ENCODE measurements at regions of chr18 and their contacts with region 1.

Region 1: DNA sequence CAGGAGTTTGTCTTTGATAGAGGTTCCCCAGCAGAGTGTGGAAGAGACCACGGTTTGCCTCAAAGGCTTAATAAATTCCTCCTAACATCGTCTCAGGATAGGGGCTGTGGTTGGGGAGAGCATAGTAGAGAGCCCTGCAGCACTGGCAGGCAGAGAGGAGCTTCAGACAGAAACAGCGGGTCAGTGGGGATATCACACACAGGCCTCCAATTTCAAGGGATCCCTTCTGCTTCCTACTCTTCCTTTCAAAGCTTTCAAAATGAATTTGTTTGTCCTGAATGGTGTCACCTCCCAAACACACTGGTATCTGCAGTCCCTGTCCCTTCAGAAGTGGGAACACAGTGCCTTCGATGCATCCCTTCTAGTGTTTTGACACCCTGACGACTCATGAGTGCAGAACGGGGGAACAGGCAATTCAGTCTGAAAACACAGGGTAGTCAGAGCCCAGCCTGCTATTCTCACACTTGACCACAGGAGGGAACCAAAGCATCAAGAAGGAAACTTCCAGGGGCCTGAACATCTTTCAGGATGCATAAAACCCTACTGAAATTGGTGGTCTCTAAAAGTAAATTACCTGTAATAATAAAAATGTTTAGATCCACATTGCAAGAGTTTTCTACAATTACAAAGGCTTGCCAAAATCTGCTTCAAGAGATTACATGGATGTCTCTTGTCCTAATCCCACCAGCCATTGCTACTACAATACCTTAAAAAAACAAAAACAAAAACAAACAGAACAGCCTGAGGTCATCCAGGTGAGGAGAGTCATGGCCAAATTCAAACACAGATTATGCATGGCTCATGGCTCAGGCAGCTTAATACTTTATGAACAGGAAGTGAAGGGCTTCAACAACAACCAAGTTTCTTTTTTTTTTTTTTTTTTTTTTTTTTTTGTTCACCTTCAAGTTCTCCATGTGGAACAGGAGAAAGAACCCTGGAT is 49.8 kb downstream of the SLC14A2 start:
- DNase-seq: peak; percentile 75
- H3K4me3 ChIP-seq: no peak overlapping the region
- H3K27ac ChIP-seq: no peak overlapping the region
- H3K4me1 ChIP-seq: no peaks in the 10 kb centered on the region
- H3K27me3 ChIP-seq: no peaks in the 10 kb centered on the region
- CTCF ChIP-seq: peak; percentile 83

Region 2: DNA sequence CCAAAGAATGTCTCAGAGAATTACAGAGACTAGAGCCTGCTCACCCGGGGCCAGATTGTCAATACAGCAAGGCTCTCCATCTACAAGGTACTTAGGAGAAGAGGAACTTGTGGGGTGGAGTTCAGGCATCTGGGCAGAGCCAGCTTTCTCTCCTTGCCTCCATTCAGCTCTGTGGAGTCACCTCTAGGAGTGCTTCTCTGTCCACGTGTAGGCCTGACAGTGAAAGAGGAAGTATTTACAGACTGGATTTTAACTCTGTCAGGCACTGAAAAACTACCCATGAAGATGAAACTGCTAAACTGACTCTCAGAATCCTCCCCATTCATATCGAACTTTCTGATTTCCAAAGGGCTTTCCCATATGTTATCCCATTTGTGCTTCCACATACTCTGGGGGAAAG is 668.8 kb before region 1 on chr18:
- CTCF ChIA-PET with region 1: interaction called, 20 read pairs
- POLR2A ChIA-PET with region 1: no interaction called
- intact Hi-C with region 1: no loop called
- DNase-seq: no peak
- H3K4me3 ChIP-seq: no peak overlapping the region
- H3K27ac ChIP-seq: no peak overlapping the region
- H3K4me1 ChIP-seq: no peaks in the 10 kb centered on the region
- H3K27me3 ChIP-seq: no peaks in the 10 kb centered on the region
- CTCF ChIP-seq: no peak

Region 3: DNA sequence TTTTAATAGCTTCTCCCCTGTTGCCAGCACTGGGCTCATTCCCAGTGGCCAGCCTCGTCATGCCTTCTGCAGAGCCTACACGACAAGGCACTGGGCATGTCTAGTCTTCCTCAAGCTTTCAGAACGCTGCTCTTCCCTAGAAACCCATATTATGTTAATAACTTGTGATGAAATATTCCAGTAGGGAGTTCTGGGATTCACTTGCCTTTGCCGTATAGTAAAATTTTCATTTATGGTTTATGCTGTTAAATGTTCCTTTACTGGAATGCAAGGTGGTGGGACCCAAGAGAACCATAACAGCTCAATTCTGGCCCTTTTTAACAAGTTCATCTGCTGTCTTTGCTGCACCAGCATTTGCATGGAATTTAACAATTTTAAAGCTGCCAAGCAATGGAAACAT is 13.3 kb after region 1 on chr18:
- CTCF ChIA-PET with region 1: interaction called, 10 read pairs
- POLR2A ChIA-PET with region 1: no interaction called
- intact Hi-C with region 1: no loop called
- DNase-seq: no peak
- H3K4me3 ChIP-seq: no peak overlapping the region
- H3K27ac ChIP-seq: no peak overlapping the region
- H3K4me1 ChIP-seq: no peaks in the 10 kb centered on the region
- H3K27me3 ChIP-seq: peaks cover 4% of the 10 kb centered on the region
- CTCF ChIP-seq: no peak

Region 4: DNA sequence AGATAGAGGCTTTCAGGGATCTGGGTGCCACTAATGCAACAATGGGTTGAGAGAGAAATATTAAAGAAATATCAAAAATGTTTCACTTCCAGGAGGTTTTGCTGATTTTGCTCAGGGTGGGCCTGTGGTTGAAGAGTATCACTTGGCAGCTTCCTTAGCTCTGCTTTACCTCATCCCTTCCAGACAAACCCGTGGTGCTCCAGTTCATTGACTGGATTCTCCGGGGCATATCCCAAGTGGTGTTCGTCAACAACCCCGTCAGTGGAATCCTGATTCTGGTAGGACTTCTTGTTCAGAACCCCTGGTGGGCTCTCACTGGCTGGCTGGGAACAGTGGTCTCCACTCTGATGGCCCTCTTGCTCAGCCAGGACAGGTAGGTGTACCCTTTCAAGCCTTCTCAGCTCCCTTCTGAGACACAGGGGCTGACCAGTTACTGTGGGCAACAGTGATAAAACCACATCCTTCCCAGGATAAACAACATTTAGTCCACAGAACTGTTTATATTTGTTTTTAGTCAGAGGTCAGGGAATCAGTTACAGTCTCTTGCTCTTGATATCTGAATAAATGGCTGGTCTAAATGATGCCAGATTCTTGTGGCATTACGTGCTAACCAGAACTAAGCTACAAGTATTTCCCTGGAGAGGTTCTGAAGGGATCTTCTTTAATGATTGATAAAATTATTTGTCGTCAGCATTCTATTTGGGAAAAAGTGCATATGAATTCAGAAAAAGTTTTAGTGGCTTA is 65.9 kb after region 1 on chr18:
- CTCF ChIA-PET with region 1: no interaction called
- POLR2A ChIA-PET with region 1: no interaction called
- intact Hi-C with region 1: no loop called
- DNase-seq: no peak
- H3K4me3 ChIP-seq: no peak overlapping the region
- H3K27ac ChIP-seq: no peak overlapping the region
- H3K4me1 ChIP-seq: no peaks in the 10 kb centered on the region
- H3K27me3 ChIP-seq: no peaks in the 10 kb centered on the region
- CTCF ChIP-seq: no peak

Region 5: GRCh38 chr18:45879681-45880655 is 214.9 kb after region 1 on chr18:
- CTCF ChIA-PET with region 1: interaction called, 13 read pairs
- POLR2A ChIA-PET with region 1: no interaction called
- intact Hi-C with region 1: loop called (anchors 10 kb)
- DNase-seq: peak; percentile 70
- H3K4me3 ChIP-seq: no peak overlapping the region
- H3K27ac ChIP-seq: no peak overlapping the region
- H3K4me1 ChIP-seq: no peaks in the 10 kb centered on the region
- H3K27me3 ChIP-seq: no peaks in the 10 kb centered on the region
- CTCF ChIP-seq: peak; percentile 99

Region 6: DNA sequence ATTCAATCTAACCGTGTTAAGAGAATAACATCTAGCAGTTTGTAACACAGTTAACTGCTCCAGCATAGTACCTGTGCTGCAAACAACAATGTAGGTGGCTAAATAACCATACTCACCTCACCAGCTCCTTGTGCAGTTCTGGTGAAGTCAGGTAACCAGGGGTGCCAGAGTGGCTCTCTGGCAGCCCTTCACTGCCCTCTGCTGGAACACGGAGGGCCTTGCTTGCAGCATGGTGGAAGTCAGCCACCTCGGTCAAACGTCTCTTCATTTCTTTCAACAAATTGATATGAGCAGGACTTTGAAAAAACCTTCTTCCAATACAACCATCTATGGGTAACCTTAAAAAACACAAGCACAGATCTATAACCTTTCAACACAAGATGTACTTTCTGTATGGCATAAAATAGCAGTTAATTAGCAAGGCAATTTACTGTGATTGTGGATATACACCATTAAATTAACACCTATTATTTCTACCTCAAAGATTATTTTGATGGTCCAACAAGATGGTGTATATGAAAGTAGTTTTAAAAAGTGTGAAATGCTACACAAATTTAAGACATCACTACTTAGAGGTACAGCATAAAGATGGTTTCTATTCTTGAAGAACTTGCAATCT is 245.4 kb after region 1 on chr18:
- CTCF ChIA-PET with region 1: no interaction called
- POLR2A ChIA-PET with region 1: no interaction called
- intact Hi-C with region 1: loop called (anchors 1 kb)
- DNase-seq: peak; percentile 46
- H3K4me3 ChIP-seq: no peak overlapping the region
- H3K27ac ChIP-seq: no peak overlapping the region
- H3K4me1 ChIP-seq: no peaks in the 10 kb centered on the region
- H3K27me3 ChIP-seq: no peaks in the 10 kb centered on the region
- CTCF ChIP-seq: peak; percentile 81

Region 7: GRCh38 chr18:45974088-45974536 is 309.0 kb after region 1 on chr18:
- CTCF ChIA-PET with region 1: interaction called, 4 read pairs
- POLR2A ChIA-PET with region 1: no interaction called
- intact Hi-C with region 1: loop called (anchors 5 kb)
- DNase-seq: peak; percentile 82
- H3K4me3 ChIP-seq: no peak overlapping the region
- H3K27ac ChIP-seq: no peak overlapping the region
- H3K4me1 ChIP-seq: no peaks in the 10 kb centered on the region
- H3K27me3 ChIP-seq: no peaks in the 10 kb centered on the region
- CTCF ChIP-seq: peak; percentile 81

Region 8: GRCh38 chr18:46073474-46074331 is 408.6 kb after region 1 on chr18:
- CTCF ChIA-PET with region 1: interaction called, 3 read pairs
- POLR2A ChIA-PET with region 1: no interaction called
- intact Hi-C with region 1: loop called (anchors 2 kb)
- DNase-seq: peak; percentile 83
- H3K4me3 ChIP-seq: no peak overlapping the region
- H3K27ac ChIP-seq: no peak overlapping the region
- H3K4me1 ChIP-seq: peaks cover 5% of the 10 kb centered on the region
- H3K27me3 ChIP-seq: no peaks in the 10 kb centered on the region
- CTCF ChIP-seq: peak; percentile 70